ENCODE measurements at regions of chr19 and their contacts with region 1.

Region 1: DNA sequence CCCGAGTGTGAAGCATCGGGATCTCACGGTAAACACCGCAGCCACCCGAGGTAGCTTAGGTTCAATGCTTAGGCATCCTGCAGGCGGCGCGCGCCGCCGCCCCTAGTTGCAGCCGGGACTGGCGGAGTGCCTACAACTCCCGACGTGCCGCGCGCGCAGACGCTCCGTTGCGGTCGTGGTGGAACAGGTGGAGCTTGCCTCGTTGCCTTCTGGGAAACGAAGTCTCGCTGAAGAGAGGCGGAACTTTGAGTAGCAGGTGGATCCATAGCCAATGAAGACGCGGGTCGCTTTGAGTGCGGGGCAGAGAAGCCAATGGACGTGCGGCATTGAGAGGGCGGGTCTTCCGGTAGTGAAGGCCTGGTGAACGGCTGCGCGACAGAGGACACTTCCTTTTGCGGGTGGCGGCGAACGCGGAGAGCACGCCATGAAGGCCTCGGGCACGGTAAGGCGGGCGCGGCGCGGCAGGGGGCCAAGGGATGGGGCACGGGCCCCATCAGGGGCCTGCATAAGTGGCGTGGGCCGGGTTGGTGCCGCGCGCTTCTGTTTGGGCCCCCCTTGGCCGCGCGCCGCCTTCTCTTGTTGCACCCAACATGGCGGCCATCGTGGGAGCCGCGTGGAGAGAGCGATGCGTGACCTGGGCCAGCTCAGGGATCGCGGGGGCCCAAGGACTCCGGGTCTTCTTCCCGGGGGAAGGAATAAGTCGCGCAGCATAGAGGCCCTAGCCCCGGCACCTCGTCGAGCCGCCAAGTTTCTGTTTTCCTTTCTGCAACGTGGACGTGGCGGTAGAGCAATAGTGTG is at the start of gene RPL18A:
- DNase-seq: peak; percentile 100
- ATAC-seq: peak; percentile 95
- H3K4me3 Mint-ChIP-seq: peak within 1 kb of the TSS; percentile 97
- H3K27ac Mint-ChIP-seq: peak within 1 kb of the TSS; percentile 98
- H3K4me1 Mint-ChIP-seq: peaks cover 35% of the 10 kb centered on the region
- H3K27me3 Mint-ChIP-seq: no peaks in the 10 kb centered on the region
- total RNA-seq, gene RPL18A: 3,109 to 3,329 TPM

Region 2: GRCh38 chr19:17406887-17407196 is 452.9 kb before region 1 on chr19:
- CTCF ChIA-PET with region 1: no interaction called
- POLR2A ChIA-PET with region 1: no interaction called
- intact Hi-C with region 1: no loop called
- DNase-seq: no peak
- ATAC-seq: no peak
- H3K4me3 Mint-ChIP-seq: peak overlapping the region; percentile 76
- H3K27ac Mint-ChIP-seq: peak overlapping the region; percentile 90
- H3K4me1 Mint-ChIP-seq: peaks cover 28% of the 10 kb centered on the region
- H3K27me3 Mint-ChIP-seq: no peaks in the 10 kb centered on the region

Region 3: GRCh38 chr19:17448131-17448967 is 411.4 kb before region 1 on chr19 and contains the start of gene TMEM221:
- CTCF ChIA-PET with region 1: no interaction called
- POLR2A ChIA-PET with region 1: no interaction called
- intact Hi-C with region 1: loop called in 1 of 2 experiments (anchors 2 kb)
- DNase-seq: peak; percentile 77
- ATAC-seq: peak; percentile 57
- H3K4me3 Mint-ChIP-seq: no peak within 1 kb of the TSS
- H3K27ac Mint-ChIP-seq: no peak within 1 kb of the TSS
- H3K4me1 Mint-ChIP-seq: peaks cover 16% of the 10 kb centered on the region
- H3K27me3 Mint-ChIP-seq: peaks cover 14% of the 10 kb centered on the region
- total RNA-seq, gene TMEM221: not detected

Region 4: GRCh38 chr19:17605761-17606745 is 253.7 kb before region 1 on chr19:
- CTCF ChIA-PET with region 1: interaction called, 5 read pairs
- POLR2A ChIA-PET with region 1: no interaction called
- intact Hi-C with region 1: loop called in 1 of 2 experiments (anchors 1 kb)
- DNase-seq: peak; percentile 90
- ATAC-seq: peak; percentile 89
- H3K4me3 Mint-ChIP-seq: peak overlapping the region; percentile 65
- H3K27ac Mint-ChIP-seq: no peak overlapping the region
- H3K4me1 Mint-ChIP-seq: peaks cover 8% of the 10 kb centered on the region
- H3K27me3 Mint-ChIP-seq: peaks cover 29% of the 10 kb centered on the region

Region 5: GRCh38 chr19:17747205-17748098 is 112.3 kb before region 1 on chr19:
- CTCF ChIA-PET with region 1: interaction called, 9 read pairs
- POLR2A ChIA-PET with region 1: interaction called, 3 read pairs
- intact Hi-C with region 1: loop called in 1 of 2 experiments (anchors 1 kb)
- DNase-seq: peak; percentile 98
- ATAC-seq: peak; percentile 90
- H3K4me3 Mint-ChIP-seq: peak overlapping the region; percentile 76
- H3K27ac Mint-ChIP-seq: peak overlapping the region; percentile 60
- H3K4me1 Mint-ChIP-seq: peaks cover 42% of the 10 kb centered on the region
- H3K27me3 Mint-ChIP-seq: no peaks in the 10 kb centered on the region

Region 6: DNA sequence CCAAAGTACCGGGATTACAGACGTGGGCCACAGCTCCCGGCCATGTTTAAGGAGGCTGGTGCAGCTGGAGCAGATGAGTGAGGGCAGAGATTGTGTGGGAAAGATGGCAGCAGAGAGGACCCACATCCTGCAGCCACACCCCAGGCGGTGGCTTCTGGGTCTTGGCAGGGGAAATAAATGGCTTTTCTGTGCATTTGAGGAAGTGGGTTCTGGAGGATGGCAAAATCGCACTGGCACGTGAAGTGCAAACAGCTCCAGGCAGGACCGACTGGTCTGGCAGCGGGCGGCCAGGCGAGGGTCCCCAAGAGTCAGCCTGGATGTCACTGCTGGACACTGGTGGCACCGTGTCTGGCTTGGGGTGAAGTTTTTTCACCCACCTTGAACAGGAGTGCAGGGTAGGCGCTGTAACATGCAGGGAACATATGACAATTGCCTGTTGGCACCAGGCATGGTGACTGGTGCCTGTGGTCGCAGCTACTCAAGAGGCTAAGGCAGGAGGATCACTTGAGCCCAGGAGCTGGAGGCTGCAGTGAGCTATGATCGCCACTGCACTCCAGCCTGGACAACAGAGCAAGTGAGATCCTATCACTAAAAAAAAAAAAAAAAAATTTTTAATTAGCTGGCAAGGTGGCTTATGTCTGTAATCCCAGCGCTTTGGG is 56.3 kb before region 1 on chr19:
- CTCF ChIA-PET with region 1: interaction called, 11 read pairs
- POLR2A ChIA-PET with region 1: interaction called, 5 read pairs
- intact Hi-C with region 1: loop called in 1 of 2 experiments (anchors 5 kb)
- DNase-seq: peak; percentile 41
- ATAC-seq: peak; percentile 39
- H3K4me3 Mint-ChIP-seq: no peak overlapping the region
- H3K27ac Mint-ChIP-seq: peak overlapping the region; percentile 72
- H3K4me1 Mint-ChIP-seq: peaks cover 33% of the 10 kb centered on the region
- H3K27me3 Mint-ChIP-seq: no peaks in the 10 kb centered on the region

Region 7: DNA sequence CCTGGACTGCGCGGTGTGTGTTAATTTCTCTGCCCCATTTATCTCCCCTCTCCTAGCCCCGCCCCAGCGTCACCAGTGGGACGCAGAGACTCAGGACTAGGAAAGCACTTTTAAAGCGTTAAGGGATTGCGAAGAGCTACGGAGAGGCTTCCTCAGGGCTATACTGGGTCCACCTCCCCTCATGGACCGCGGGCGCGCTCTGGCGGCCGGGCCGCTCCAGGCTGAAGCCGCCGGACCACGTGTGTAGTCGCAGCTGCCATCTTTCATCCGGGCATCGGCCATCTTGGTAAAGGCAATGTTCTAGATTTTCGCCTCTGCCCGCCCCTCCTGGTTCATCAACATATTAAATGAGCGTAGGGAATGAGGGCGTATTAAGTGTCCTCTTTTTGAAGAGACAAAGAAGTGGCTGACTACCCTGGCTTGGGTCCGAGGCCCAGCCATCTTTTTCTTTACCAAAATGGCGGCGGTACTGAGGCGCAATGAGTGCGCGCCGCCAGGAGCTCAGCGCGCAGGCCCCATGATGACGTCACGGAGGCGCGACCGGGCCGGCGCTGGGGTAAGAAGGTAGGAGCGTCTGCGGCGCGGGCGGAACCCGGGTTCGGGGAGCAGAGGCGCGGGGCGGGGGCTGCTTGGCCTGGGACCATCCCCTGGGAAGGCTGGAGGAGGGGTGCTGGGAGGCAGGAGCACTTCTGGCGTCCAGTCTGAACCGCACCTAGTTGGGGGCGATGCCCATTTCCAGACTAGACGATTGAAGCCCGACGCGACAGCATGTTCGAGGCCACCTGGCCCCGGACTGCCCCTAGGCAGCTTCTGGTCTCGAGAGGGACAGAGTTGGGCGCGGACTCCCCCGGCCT is 73.0 kb after region 1 on chr19 and contains the start of gene CCDC124:
- CTCF ChIA-PET with region 1: interaction called, 102 read pairs
- POLR2A ChIA-PET with region 1: interaction called, 38 read pairs
- intact Hi-C with region 1: loop called (anchors 1 kb)
- DNase-seq: peak; percentile 96
- ATAC-seq: peak; percentile 98
- H3K4me3 Mint-ChIP-seq: peak within 1 kb of the TSS; percentile 88
- H3K27ac Mint-ChIP-seq: peak within 1 kb of the TSS; percentile 92
- H3K4me1 Mint-ChIP-seq: peaks cover 18% of the 10 kb centered on the region
- H3K27me3 Mint-ChIP-seq: no peaks in the 10 kb centered on the region
- total RNA-seq, gene CCDC124: 99.3 to 131 TPM